Naive thymus-derived CD4-positive, alpha-beta T cell (primary cell): ENCODE measurements at regions of chr14 and their contacts with region 1.

Region 1: GRCh38 chr14:102362545-102363181 is at the starts of genes CINP and TECPR2:
- DNase-seq: peak; percentile 88 to 95 (median 92)
- ATAC-seq: peak; percentile 97
- H3K4me3 ChIP-seq: peak within 1 kb of the TSS; percentile 96
- H3K4me3 Mint-ChIP-seq: peak within 1 kb of the TSS in 6 of 10 donors; percentile 92 to 97 (median 95)
- H3K27ac ChIP-seq: peak within 1 kb of the TSS; percentile 87
- H3K27ac Mint-ChIP-seq: peak within 1 kb of the TSS; percentile 82 to 99 (median 96)
- H3K4me1 ChIP-seq: peaks cover 6 to 15% of the 10 kb centered on the region in 2 donors
- H3K4me1 Mint-ChIP-seq: peaks cover 17 to 42% (median 36%) of the 10 kb centered on the region in 7 donors
- H3K27me3 ChIP-seq: no peaks in the 10 kb centered on the region
- H3K27me3 Mint-ChIP-seq: no peaks in the 10 kb centered on the region
- total RNA-seq, gene CINP: 16.8 to 34.4 (median 31.8) TPM
- total RNA-seq, gene TECPR2: 8.7 to 12.9 (median 11.4) TPM

Region 2: GRCh38 chr14:102272392-102272791 is 90.3 kb before region 1 on chr14:
- CTCF ChIA-PET with region 1: no interaction called
- POLR2A ChIA-PET with region 1: no interaction called
- intact Hi-C with region 1: no loop called
- DNase-seq: no peak
- ATAC-seq: no peak
- H3K4me3 ChIP-seq: no peak overlapping the region
- H3K4me3 Mint-ChIP-seq: no peak overlapping the region
- H3K27ac ChIP-seq: no peak overlapping the region
- H3K27ac Mint-ChIP-seq: no peak overlapping the region
- H3K4me1 ChIP-seq: no peaks in the 10 kb centered on the region
- H3K4me1 Mint-ChIP-seq: no peaks in the 10 kb centered on the region
- H3K27me3 ChIP-seq: no peaks in the 10 kb centered on the region
- H3K27me3 Mint-ChIP-seq: peaks cover 0 to 7% (median 0%) of the 10 kb centered on the region in 5 donors

Region 3: DNA sequence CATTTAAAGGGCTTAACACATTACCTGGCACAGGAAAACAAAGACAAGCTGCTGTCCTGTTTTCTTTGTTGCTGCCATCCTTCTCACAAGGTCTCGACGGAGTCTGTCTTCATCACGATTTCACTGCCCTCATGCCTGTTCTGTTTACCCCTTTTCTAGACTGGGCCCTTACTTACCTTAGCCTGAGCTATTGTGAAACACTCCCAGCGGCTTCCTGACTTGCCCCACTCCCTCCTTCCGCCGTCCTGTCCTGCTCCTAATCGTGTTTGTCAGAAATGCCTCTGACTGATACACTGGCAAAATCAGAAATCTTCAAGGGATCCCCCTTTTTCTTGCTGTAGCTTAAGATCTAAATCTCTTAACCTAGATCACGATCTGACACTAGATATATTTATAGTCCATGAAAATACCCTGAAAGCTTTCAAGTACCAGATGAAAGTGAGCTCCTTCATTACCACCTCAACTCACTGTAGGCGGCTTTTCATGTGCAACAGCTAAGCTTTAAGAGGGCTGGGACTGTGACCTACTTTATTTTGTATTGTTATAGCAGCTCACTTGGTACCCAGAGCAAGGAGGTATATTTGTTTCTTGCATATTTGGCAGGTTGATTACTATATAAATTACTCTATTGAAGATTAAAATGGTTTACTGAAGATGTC is 32.2 kb after region 1 on chr14:
- CTCF ChIA-PET with region 1: no interaction called
- POLR2A ChIA-PET with region 1: no interaction called
- intact Hi-C with region 1: loop called in 1 of 2 experiments (anchors 1 kb)
- DNase-seq: peak in 6 of 9 donors; percentile 22 to 53 (median 34)
- ATAC-seq: peak; percentile 82
- H3K4me3 ChIP-seq: no peak overlapping the region
- H3K4me3 Mint-ChIP-seq: peak overlapping the region; percentile 13 to 82 (median 64)
- H3K27ac ChIP-seq: peak overlapping the region; percentile 44
- H3K27ac Mint-ChIP-seq: peak overlapping the region in 8 of 9 donors; percentile 59 to 90 (median 80)
- H3K4me1 ChIP-seq: peaks cover 0 to 8% of the 10 kb centered on the region in 2 donors
- H3K4me1 Mint-ChIP-seq: peaks cover 5 to 22% (median 14%) of the 10 kb centered on the region in 7 donors
- H3K27me3 ChIP-seq: no peaks in the 10 kb centered on the region
- H3K27me3 Mint-ChIP-seq: no peaks in the 10 kb centered on the region